ENCODE measurements at regions of chr4 and their contacts with region 1.

Region 1: DNA sequence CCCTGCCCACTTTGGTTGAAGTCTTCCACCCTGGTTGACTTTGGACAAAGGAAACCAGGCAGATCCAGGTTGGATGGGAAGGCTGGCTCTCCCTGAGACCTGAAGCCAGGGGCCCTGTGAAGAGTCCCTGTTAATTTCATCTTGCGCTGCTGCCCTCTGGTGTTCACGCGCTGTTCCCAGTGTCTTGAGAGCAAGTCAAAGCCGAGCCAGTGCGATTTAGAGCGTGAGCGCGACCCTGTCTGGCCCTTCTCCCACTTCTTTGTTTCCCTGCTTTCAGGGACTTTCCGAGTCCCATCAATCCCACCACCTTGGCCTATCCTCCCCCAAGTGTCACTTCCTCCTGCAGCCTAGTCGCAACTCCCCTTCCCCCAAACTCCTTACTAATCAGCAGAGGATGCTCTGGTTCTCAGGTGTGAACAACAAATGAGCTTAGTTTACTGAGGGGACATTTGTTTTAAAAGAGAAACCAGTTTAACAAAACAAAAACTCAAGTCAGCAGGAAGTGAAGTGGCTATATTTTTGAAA is 25.8 kb upstream of the CHRNA9 start:
- DNase-seq: peak; percentile 92
- ATAC-seq: peak; percentile 65
- H3K4me3 ChIP-seq: peak overlapping the region; percentile 59
- H3K27ac ChIP-seq: peak overlapping the region; percentile 76
- H3K4me1 ChIP-seq: peaks cover 58% of the 10 kb centered on the region
- H3K27me3 ChIP-seq: no peaks in the 10 kb centered on the region
- CTCF ChIP-seq: peak; percentile 87 to 90 (median 89)
- EP300 ChIP-seq: peak; percentile 68 to 90; a peak in 3 of 4 replicates
- POLR2A ChIP-seq: peak; percentile 49
- RAD21 ChIP-seq: peak; percentile 85

Region 2: DNA sequence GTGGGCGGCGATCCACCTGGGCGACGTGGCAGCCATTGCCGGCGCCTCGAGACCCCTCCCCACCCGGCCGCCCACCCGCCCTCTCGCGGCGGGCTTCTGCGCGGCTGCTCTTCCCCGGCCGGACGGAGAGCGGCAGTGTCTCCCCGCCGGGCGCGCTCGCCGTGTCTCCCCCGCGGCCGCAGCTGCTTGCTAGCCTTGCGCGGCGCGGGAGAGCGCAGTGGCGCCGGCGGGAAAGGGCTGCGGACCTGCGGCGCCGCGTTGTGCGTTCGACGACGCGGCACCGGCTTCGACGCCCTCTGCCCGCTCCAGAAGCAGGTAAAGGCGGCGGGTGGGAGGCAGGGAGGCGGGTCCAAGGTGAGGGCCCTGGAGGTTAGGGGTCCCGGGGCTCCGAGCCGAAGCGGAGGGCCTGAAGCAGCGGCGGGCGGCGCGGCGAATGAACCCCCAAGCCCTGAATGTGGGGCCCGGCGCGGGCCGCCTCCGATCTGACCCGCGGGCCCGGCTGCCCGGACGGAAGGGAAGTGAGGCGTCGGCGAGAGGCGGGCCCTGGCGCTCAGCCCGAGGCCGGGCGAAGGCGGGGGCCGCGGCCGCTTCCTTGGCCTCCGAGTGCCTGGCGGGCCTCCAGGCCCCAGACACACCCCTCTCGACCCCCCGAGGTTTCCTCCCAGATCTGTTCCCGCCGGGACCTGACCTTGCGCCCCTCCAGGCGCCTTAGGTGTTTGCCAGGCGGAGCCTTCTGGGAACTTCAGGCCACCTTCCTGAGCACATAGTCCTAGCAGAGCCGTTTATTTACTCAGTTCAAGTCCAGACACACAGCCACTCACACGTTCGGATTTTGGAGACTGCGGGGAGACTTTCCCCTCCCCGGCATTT is 252.4 kb before region 1 on chr4 and contains the start of gene N4BP2:
- CTCF ChIA-PET with region 1: interaction called, 9 read pairs
- POLR2A ChIA-PET with region 1: interaction called, 9 read pairs
- RAD21 ChIA-PET with region 1: interaction called, 14 read pairs
- SMC1A ChIA-PET with region 1: interaction called, 17 read pairs
- in situ Hi-C with region 1: loop called (anchors 5 kb)
- intact Hi-C with region 1: loop called (anchors 5 kb)
- DNase-seq: peak; percentile 5
- ATAC-seq: peak; percentile 80
- H3K4me3 ChIP-seq: peak within 1 kb of the TSS; percentile 83
- H3K27ac ChIP-seq: peak within 1 kb of the TSS; percentile 80
- H3K4me1 ChIP-seq: peaks cover 10% of the 10 kb centered on the region
- H3K27me3 ChIP-seq: no peaks in the 10 kb centered on the region
- CTCF ChIP-seq: peak; percentile 73 to 97 (median 78)
- EP300 ChIP-seq: no peak
- POLR2A ChIP-seq: peak; percentile 80
- RAD21 ChIP-seq: peak; percentile 80
- polyA plus RNA-seq, gene N4BP2: 2.3 to 3.6 TPM

Region 3: GRCh38 chr4:40185830-40186664 is 123.3 kb before region 1 on chr4:
- CTCF ChIA-PET with region 1: interaction called, 121 read pairs
- POLR2A ChIA-PET with region 1: interaction called, 33 read pairs
- RAD21 ChIA-PET with region 1: interaction called, 356 read pairs
- SMC1A ChIA-PET with region 1: interaction called, 374 read pairs
- in situ Hi-C with region 1: no loop called
- intact Hi-C with region 1: loop called (anchors 1 kb)
- DNase-seq: peak; percentile 94
- ATAC-seq: peak; percentile 66
- H3K4me3 ChIP-seq: no peak overlapping the region
- H3K27ac ChIP-seq: peak overlapping the region; percentile 89
- H3K4me1 ChIP-seq: peaks cover 46% of the 10 kb centered on the region
- H3K27me3 ChIP-seq: no peaks in the 10 kb centered on the region
- CTCF ChIP-seq: no peak
- EP300 ChIP-seq: peak; percentile 81 to 90
- POLR2A ChIP-seq: 0 out of 2 replicates have a peak, but pooled peaks have one; percentile 31
- RAD21 ChIP-seq: 0 out of 2 replicates have a peak, but pooled peaks have one; percentile 0

Region 4: DNA sequence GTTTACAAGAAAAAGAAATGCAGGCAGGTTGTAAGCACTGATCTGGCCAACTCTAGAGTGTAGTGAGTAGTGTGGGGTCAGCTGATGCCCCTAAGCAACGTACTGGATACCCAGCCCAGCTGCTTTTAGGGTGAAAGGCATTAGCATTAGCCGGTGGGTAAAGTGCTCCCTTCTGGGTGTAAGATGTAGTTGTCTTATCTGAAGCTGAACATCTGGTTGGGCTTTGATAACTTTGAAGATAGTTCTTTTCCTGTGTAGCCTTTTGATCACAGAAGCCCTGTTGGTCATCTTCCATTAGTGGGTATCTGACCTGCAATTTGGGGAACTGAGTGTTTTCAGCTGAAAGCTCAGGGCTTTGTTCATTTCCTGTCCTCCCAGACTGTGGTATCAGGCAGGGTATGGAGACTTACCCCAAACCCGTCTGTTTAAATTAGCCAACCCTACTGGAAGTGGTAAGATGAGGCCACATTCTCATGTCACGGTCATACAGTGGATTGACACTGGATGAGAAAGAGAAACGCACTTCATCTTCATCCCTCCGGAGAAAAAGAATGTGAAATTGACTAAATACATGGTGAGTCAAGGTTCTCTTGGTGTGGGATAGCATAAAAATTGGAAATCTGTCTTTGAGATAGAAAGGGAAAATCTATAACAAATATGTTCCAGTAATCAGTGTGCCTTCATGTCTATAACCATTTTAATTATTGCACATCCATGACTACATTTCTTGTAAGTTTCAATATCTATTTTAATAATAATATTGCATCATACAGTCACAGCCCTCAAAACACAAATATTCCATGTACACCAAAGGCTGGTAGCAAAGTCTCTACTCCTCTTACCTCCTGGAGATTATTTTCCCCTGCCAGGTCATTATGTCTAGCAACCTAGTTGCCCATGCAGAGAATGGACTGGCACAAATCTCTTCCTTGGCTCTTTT is 103.8 kb before region 1 on chr4:
- CTCF ChIA-PET with region 1: interaction called, 53 read pairs
- POLR2A ChIA-PET with region 1: interaction called, 24 read pairs
- RAD21 ChIA-PET with region 1: interaction called, 356 read pairs
- SMC1A ChIA-PET with region 1: interaction called, 374 read pairs
- in situ Hi-C with region 1: loop called (anchors 5 kb)
- intact Hi-C with region 1: loop called (anchors 1 kb)
- DNase-seq: peak; percentile 96
- ATAC-seq: peak; percentile 57
- H3K4me3 ChIP-seq: peak overlapping the region; percentile 72
- H3K27ac ChIP-seq: peak overlapping the region; percentile 92
- H3K4me1 ChIP-seq: peaks cover 22% of the 10 kb centered on the region
- H3K27me3 ChIP-seq: no peaks in the 10 kb centered on the region
- CTCF ChIP-seq: no peak
- EP300 ChIP-seq: peak; percentile 78 to 86
- POLR2A ChIP-seq: peak; percentile 57
- RAD21 ChIP-seq: 0 out of 2 replicates have a peak, but pooled peaks have one; percentile 1

Region 5: DNA sequence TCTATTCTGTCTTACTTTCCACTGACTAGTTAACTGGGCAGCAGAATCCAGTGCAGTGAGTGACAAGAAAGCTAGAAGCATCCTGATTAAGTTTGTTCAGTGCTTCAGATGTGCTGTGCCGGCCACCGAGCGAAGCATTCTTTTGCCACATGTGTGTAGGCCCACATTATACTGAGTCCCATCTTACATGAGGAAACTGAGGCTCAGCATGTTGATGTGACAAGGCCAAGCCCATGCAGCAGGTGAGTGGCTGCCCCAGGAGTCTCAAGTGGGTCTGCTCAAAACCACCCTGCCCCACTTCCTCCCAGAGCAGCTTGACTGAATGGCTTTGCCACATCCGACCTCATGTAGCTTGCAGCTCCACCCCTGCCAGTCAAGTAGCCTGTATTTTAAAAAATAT is 62.0 kb before region 1 on chr4:
- CTCF ChIA-PET with region 1: interaction called, 5 read pairs
- POLR2A ChIA-PET with region 1: no interaction called
- RAD21 ChIA-PET with region 1: interaction called, 4 read pairs
- SMC1A ChIA-PET with region 1: interaction called, 4 read pairs
- in situ Hi-C with region 1: no loop called
- intact Hi-C with region 1: loop called (anchors 2 kb)
- DNase-seq: no peak
- ATAC-seq: peak; percentile 44
- H3K4me3 ChIP-seq: no peak overlapping the region
- H3K27ac ChIP-seq: no peak overlapping the region
- H3K4me1 ChIP-seq: no peaks in the 10 kb centered on the region
- H3K27me3 ChIP-seq: no peaks in the 10 kb centered on the region
- CTCF ChIP-seq: no peak
- EP300 ChIP-seq: no peak
- POLR2A ChIP-seq: peak; percentile 75
- RAD21 ChIP-seq: no peak

Region 6: DNA sequence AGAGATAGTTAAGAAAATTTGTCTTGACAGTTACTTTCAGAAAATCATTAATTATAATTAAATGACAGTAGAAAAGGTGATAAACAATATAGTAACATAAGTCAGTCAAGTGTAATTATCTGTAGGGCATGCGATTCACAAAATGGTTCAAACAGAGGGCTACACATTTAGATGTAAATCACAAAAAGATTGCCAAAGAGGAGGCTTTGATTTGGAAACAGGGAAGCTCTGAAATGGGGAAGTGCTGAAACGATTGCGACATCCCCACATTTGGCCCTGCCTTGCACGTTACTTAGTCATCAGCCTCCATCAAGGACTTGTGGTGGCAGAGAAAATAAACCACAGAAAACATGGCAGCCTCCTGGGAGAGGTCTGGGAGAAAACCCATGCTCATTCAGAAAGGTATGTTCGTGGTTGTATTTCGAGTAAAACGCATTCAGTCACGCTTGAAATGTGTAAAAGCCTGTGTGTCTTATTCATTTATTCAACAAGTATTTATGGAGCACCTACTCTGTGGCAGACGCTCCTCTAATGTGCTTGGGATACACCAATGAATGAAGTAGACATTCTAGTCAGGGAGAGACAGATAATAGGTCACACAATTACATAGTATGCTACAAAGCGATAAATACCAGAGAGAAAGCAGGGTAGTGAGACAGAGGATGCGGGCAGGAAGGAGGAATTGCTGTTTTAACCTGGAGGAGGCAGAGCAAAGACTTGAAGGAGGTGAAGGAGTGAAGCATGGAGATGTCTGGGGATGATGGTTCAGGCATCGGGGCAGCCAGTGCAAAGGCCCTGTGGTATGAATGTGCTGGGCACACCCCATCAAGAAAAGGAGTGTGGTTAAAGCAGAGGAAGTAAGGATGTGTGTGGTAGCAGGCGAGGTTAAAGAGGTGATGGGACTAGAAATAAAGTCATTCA is 312.5 kb after region 1 on chr4:
- CTCF ChIA-PET with region 1: no interaction called
- POLR2A ChIA-PET with region 1: no interaction called
- RAD21 ChIA-PET with region 1: interaction called, 4 read pairs
- SMC1A ChIA-PET with region 1: no interaction called
- in situ Hi-C with region 1: no loop called
- intact Hi-C with region 1: loop called (anchors 2 kb)
- DNase-seq: peak; percentile 93
- ATAC-seq: peak; percentile 66
- H3K4me3 ChIP-seq: peak overlapping the region; percentile 58
- H3K27ac ChIP-seq: peak overlapping the region; percentile 93
- H3K4me1 ChIP-seq: peaks cover 38% of the 10 kb centered on the region
- H3K27me3 ChIP-seq: no peaks in the 10 kb centered on the region
- CTCF ChIP-seq: no peak
- EP300 ChIP-seq: peak; percentile 74 to 81
- POLR2A ChIP-seq: no peak; the same call in 1 of the 2 replicates
- RAD21 ChIP-seq: 0 out of 2 replicates have a peak, but pooled peaks have one; percentile 13